Dorsolateral prefrontal cortex (tissue), 120 donors: ENCODE measurements at regions of chr12 and their contacts with region 1.

Region 1: GRCh38 chr12:10140001-10140400 is 10.0 kb upstream of the CLEC7A start:
- DNase-seq: peak in 1 of 10 donors; percentile 51
- H3K4me3 ChIP-seq: no peak overlapping the region
- H3K27ac ChIP-seq: no peak overlapping the region
- H3K27me3 ChIP-seq: peaks cover 0 to 4% (median 0%) of the 10 kb centered on the region in 45 donors
- CTCF ChIP-seq: peak in 55 of 56 donors; percentile 55 to 88 (median 74)

Region 2: GRCh38 chr12:9745199-9745598 is 394.8 kb before region 1 on chr12:
- intact Hi-C with region 1: loop called (anchors 2 to 5 kb)
- DNase-seq: no peak
- H3K4me3 ChIP-seq: no peak overlapping the region
- H3K27ac ChIP-seq: no peak overlapping the region
- H3K27me3 ChIP-seq: no peaks in the 10 kb centered on the region
- CTCF ChIP-seq: no peak

Region 3: GRCh38 chr12:9750276-9751203 is 389.5 kb before region 1 on chr12:
- intact Hi-C with region 1: loop called (anchors 2 to 5 kb)
- DNase-seq: peak in 4 of 10 donors; percentile 6 to 39 (median 20)
- H3K4me3 ChIP-seq: peak overlapping the region in 53 of 59 donors; percentile 0 to 61 (median 29)
- H3K27ac ChIP-seq: peak overlapping the region in 1 of 59 donors; percentile 11
- H3K27me3 ChIP-seq: no peaks in the 10 kb centered on the region
- CTCF ChIP-seq: peak; percentile 71 to 98 (median 89)

Region 4: GRCh38 chr12:9813821-9814809 is 325.9 kb before region 1 on chr12:
- intact Hi-C with region 1: loop called in 1 of 2 experiments (anchors 5 kb)
- DNase-seq: peak in 8 of 10 donors; percentile 21 to 72 (median 47)
- H3K4me3 ChIP-seq: peak overlapping the region in 29 of 59 donors; percentile 5 to 56 (median 36)
- H3K27ac ChIP-seq: no peak overlapping the region
- H3K27me3 ChIP-seq: peaks cover 0 to 27% (median 0%) of the 10 kb centered on the region in 45 donors
- CTCF ChIP-seq: peak in 54 of 56 donors; percentile 18 to 75 (median 57)

Region 5: DNA sequence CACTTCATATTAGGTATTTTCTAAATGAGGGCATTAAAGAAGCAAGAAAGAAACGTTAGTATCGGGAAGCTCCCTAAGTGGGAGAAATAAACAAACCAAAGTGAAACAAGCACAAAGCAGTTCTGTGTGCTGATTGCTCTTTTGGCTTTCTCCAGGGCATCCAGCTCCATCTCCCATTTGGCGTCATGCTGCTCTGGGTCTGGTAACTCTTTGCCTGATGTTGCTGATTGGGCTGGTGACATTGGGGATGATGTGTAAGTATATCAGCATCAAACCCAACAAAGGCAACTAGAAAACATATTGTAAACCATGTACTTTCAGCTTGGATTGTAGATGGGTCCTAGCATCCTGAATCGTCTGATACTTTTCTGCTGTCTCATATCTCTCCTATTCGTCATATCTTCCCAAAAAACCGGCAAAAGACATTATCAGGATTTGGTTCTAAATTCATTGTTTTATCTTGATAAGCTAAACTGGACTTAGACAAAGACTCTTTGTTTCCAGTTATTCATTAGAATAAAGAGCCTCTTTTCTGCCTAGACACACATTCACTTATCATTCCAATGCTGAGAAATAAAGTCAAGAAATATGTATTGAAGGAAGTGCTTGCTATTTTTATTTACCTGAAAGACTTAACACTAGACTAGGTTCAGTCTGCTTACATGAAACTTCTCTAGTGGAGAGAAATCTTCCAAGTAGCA is 127.2 kb before region 1 on chr12:
- intact Hi-C with region 1: loop called in 1 of 2 experiments (anchors 5 kb)
- DNase-seq: no peak
- H3K4me3 ChIP-seq: peak overlapping the region in 51 of 59 donors; percentile 0 to 60 (median 31)
- H3K27ac ChIP-seq: peak overlapping the region in 57 of 59 donors; percentile 3 to 86 (median 68)
- H3K27me3 ChIP-seq: peaks cover 0 to under 1% (median 0%) of the 10 kb centered on the region in 45 donors
- CTCF ChIP-seq: peak in 1 of 56 donors; percentile 22

Region 6: GRCh38 chr12:10033783-10034545 is 106.0 kb before region 1 on chr12:
- intact Hi-C with region 1: loop called (anchors 10 kb)
- DNase-seq: no peak
- H3K4me3 ChIP-seq: no peak overlapping the region
- H3K27ac ChIP-seq: no peak overlapping the region
- H3K27me3 ChIP-seq: no peaks in the 10 kb centered on the region
- CTCF ChIP-seq: peak in 55 of 56 donors; percentile 28 to 73 (median 53)

Region 7: GRCh38 chr12:10052193-10052913 is 87.6 kb before region 1 on chr12:
- intact Hi-C with region 1: no loop called
- DNase-seq: no peak
- H3K4me3 ChIP-seq: peak overlapping the region in 21 of 59 donors; percentile 0 to 43 (median 15)
- H3K27ac ChIP-seq: peak overlapping the region in 17 of 59 donors; percentile 6 to 61 (median 19)
- H3K27me3 ChIP-seq: peaks cover 0 to 2% (median 0%) of the 10 kb centered on the region in 45 donors
- CTCF ChIP-seq: no peak